Caco-2 (cell line): ENCODE measurements at regions of chr6 and their contacts with region 1.

Region 1: DNA sequence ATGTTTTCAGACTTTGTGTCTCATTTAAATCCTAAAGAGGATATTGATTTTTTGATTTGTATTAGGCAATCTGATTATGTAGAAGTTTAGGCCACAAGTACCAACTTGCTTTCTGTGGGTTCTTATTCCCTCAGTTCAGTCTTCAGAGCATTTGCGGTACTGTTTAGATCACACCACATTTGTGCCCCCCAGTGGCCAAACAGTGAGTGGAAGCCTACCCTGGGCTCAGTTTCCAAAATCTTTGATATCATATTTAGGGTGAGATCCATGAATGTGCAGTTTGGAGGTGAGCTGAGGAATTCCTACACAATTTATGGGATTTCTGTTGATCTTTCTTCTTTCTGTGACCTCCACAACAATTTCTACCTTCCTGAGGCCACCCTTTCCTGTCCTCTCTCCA is 92.3 kb upstream of the FUT9 start:
- DNase-seq: peak in 1 of 2 experiments; percentile 32
- H3K4me3 ChIP-seq: no peak overlapping the region
- H3K4me3 Mint-ChIP-seq: no peak overlapping the region
- H3K27ac Mint-ChIP-seq: no peak overlapping the region
- H3K4me1 ChIP-seq: no peaks in the 10 kb centered on the region
- H3K4me1 Mint-ChIP-seq: no peaks in the 10 kb centered on the region
- H3K27me3 ChIP-seq: no peaks in the 10 kb centered on the region
- H3K27me3 Mint-ChIP-seq: peaks cover 2% of the 10 kb centered on the region
- CTCF ChIP-seq: peak; percentile 46 to 55

Region 2: GRCh38 chr6:95648638-95649037 is 274.9 kb before region 1 on chr6:
- CTCF ChIA-PET with region 1: no interaction called
- POLR2A ChIA-PET with region 1: no interaction called
- intact Hi-C with region 1: loop called (anchors 1 kb)
- DNase-seq: peak in 1 of 2 experiments; percentile 38
- H3K4me3 ChIP-seq: no peak overlapping the region
- H3K4me3 Mint-ChIP-seq: no peak overlapping the region
- H3K27ac Mint-ChIP-seq: no peak overlapping the region
- H3K4me1 ChIP-seq: no peaks in the 10 kb centered on the region
- H3K4me1 Mint-ChIP-seq: no peaks in the 10 kb centered on the region
- H3K27me3 ChIP-seq: no peaks in the 10 kb centered on the region
- H3K27me3 Mint-ChIP-seq: no peaks in the 10 kb centered on the region
- CTCF ChIP-seq: peak in 1 of 2 experiments; percentile 4

Region 3: GRCh38 chr6:95658886-95659285 is 264.6 kb before region 1 on chr6:
- CTCF ChIA-PET with region 1: no interaction called
- POLR2A ChIA-PET with region 1: no interaction called
- intact Hi-C with region 1: no loop called
- DNase-seq: no peak
- H3K4me3 ChIP-seq: no peak overlapping the region
- H3K4me3 Mint-ChIP-seq: no peak overlapping the region
- H3K27ac Mint-ChIP-seq: no peak overlapping the region
- H3K4me1 ChIP-seq: no peaks in the 10 kb centered on the region
- H3K4me1 Mint-ChIP-seq: peaks cover 9% of the 10 kb centered on the region
- H3K27me3 ChIP-seq: no peaks in the 10 kb centered on the region
- H3K27me3 Mint-ChIP-seq: no peaks in the 10 kb centered on the region
- CTCF ChIP-seq: no peak